Heart right ventricle (tissue), 16 donors: ENCODE measurements at regions of chr15 and their contacts with region 1.

Region 1: DNA sequence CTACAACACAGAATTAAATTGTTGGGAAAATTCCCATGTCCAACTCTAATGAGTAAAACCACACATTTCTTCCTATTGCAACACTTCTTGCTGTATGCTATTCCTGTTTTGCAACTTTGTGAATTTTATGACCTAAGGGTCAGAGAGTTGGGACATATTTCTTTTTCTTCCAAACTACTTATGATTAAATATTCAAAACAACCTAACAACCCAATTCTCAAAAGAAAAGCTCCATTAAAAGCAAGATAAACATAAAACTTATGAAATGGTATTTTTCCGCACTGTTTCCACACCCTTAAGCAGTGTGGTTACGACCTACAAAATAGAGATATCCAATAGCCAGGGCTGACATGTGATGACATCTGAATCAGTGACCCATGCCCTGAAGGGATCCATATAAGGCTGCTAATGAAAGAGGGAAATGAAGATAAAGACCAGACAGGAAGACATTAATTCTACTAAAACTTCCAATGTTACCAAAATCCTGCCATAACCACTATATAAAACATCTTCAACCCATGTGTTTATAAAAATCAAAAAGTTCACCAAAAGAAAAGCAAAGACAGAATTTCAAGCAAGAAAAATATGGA is 45.6 kb downstream of the DMXL2 start:
- DNase-seq: no peak
- ATAC-seq: peak in 4 of 8 donors; percentile 38 to 82 (median 59)
- H3K4me3 ChIP-seq: no peak overlapping the region
- H3K27ac ChIP-seq: peak overlapping the region in 3 of 10 donors; percentile 26 to 75 (median 40)
- H3K4me1 ChIP-seq: peaks cover 0 to 65% (median 0%) of the 10 kb centered on the region in 9 donors
- H3K27me3 ChIP-seq: no peaks in the 10 kb centered on the region
- CTCF ChIP-seq: no peak

Region 2: DNA sequence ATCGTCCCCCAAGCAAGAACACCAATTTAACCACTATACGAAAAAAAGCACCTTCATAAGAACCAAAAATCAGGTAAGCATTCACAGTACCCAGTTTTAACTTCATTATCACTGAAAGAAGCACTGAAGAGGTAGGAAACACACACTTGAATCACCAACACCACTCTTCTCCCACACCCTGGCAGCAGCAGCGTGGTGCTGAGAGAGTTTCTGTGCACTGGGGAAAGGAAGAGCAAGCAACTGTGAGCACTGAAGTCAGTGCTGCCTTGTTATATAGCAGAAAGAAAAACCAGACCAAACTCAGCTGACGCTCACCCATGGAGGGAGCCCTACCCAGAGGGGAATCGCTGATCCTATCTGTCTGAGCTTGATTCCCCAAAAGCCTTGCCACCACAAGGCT is 52.6 kb before region 1 on chr15:
- intact Hi-C with region 1: loop called in 1 of 10 experiments (anchors 10 kb)
- DNase-seq: no peak
- ATAC-seq: no peak
- H3K4me3 ChIP-seq: no peak overlapping the region
- H3K27ac ChIP-seq: no peak overlapping the region
- H3K4me1 ChIP-seq: no peaks in the 10 kb centered on the region
- H3K27me3 ChIP-seq: no peaks in the 10 kb centered on the region
- CTCF ChIP-seq: no peak

Region 3: GRCh38 chr15:51776952-51777574 is 200.1 kb after region 1 on chr15:
- intact Hi-C with region 1: no loop called
- DNase-seq: peak in 1 of 2 donors; percentile 80
- ATAC-seq: peak; percentile 81 to 95 (median 90)
- H3K4me3 ChIP-seq: no peak overlapping the region
- H3K27ac ChIP-seq: no peak overlapping the region
- H3K4me1 ChIP-seq: peaks cover 0 to 11% (median 0%) of the 10 kb centered on the region in 9 donors
- H3K27me3 ChIP-seq: no peaks in the 10 kb centered on the region
- CTCF ChIP-seq: peak; percentile 49 to 88 (median 80)